ENCODE measurements at regions of chr3 and their contacts with region 1.

Region 1: DNA sequence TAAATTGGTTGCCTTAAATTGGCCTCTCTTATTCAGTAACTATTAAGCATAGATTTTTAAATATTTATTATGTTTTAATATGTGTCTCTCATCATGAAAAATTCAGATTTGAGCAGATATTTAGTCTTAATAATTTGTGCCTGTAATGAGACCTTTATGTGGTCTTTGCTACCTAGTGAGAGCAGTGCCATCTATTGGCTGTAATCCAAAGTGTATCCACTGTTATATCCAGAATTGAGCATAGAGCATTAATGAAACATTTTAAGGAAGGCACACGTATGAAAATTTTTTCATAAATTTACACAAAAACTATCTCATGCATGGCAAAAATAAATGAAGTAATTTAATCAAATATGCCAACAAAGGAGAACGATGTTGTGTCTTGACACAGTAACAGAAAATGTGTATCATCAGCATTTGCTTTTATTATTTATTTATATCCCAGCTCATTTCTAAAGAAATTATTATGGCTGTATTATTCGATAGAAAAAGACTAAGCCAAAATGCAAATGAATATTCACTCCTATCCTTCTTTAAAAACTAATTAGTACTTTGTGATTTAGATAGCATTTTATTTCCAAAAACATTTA is 203.5 kb downstream of the RSRC1 start:
- DNase-seq: no peak
- ATAC-seq: peak; percentile 82
- H3K4me3 ChIP-seq: no peak overlapping the region
- H3K27ac ChIP-seq: no peak overlapping the region
- H3K4me1 ChIP-seq: peaks cover 4% of the 10 kb centered on the region; the same call in 1 of the 2 replicates
- H3K27me3 ChIP-seq: no peaks in the 10 kb centered on the region
- CTCF ChIP-seq: peak; percentile 48 to 71 (median 59); a peak in 5 of 6 replicates
- EP300 ChIP-seq: no peak
- POLR2A ChIP-seq: no peak
- RAD21 ChIP-seq: peak; percentile 79

Region 2: GRCh38 chr3:157626789-157627188 is 686.6 kb before region 1 on chr3:
- CTCF ChIA-PET with region 1: no interaction called
- POLR2A ChIA-PET with region 1: no interaction called
- RAD21 ChIA-PET with region 1: no interaction called
- SMC1A ChIA-PET with region 1: no interaction called
- in situ Hi-C with region 1: loop called (anchors 25 kb)
- intact Hi-C with region 1: loop called (anchors 5 kb)
- DNase-seq: no peak
- ATAC-seq: no peak
- H3K4me3 ChIP-seq: no peak overlapping the region
- H3K27ac ChIP-seq: no peak overlapping the region
- H3K4me1 ChIP-seq: no peaks in the 10 kb centered on the region
- H3K27me3 ChIP-seq: no peaks in the 10 kb centered on the region; a peak in 1 of 4 replicates
- CTCF ChIP-seq: no peak
- EP300 ChIP-seq: no peak
- POLR2A ChIP-seq: no peak
- RAD21 ChIP-seq: no peak

Region 3: DNA sequence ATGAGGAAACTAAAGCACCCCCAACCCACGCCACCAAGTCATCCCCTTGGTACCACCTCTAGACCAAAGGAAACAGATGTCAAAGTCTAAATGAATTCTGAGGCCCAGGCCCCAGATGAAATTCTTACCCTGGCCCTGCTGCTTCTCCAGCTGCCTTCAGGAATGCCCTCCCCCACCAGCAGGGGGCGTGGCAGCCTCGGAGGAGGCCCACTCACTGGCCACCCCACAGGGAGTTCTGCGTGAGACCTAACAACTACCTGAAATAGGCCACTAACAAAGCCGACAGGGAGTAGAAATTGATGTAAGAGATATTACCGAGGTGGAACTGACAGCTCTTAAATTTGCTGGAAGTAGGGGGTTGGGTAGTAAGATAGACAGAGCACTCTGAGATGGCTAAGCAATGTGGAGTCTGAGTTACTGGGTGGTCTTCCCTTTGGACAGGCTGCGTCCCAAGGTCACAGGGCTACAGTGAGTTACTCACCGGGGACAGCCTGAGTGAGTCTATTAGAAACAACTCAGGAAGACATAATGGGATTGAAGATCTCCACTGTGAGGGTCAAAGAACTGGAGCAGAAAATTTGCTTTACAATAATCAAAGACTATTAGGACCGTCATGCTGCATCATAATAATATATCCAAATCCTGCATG is 448.0 kb before region 1 on chr3:
- CTCF ChIA-PET with region 1: interaction called, 40 read pairs
- POLR2A ChIA-PET with region 1: no interaction called
- RAD21 ChIA-PET with region 1: interaction called, 8 read pairs
- SMC1A ChIA-PET with region 1: interaction called, 25 read pairs
- in situ Hi-C with region 1: loop called (anchors 10 kb)
- intact Hi-C with region 1: loop called (anchors 1 kb)
- DNase-seq: peak; percentile 1
- ATAC-seq: peak; percentile 99
- H3K4me3 ChIP-seq: no peak overlapping the region
- H3K27ac ChIP-seq: no peak overlapping the region
- H3K4me1 ChIP-seq: no peaks in the 10 kb centered on the region
- H3K27me3 ChIP-seq: no peaks in the 10 kb centered on the region
- CTCF ChIP-seq: peak; percentile 84 to 92 (median 85)
- EP300 ChIP-seq: no peak
- POLR2A ChIP-seq: no peak
- RAD21 ChIP-seq: peak; percentile 92

Region 4: GRCh38 chr3:158109804-158110657 is 203.4 kb before region 1 on chr3 and contains the start of gene RSRC1:
- CTCF ChIA-PET with region 1: interaction called, 4 read pairs
- POLR2A ChIA-PET with region 1: no interaction called
- RAD21 ChIA-PET with region 1: interaction called, 11 read pairs
- SMC1A ChIA-PET with region 1: interaction called, 4 read pairs
- in situ Hi-C with region 1: no loop called
- intact Hi-C with region 1: no loop called
- DNase-seq: peak; percentile 55
- ATAC-seq: peak; percentile 91
- H3K4me3 ChIP-seq: peak within 1 kb of the TSS; percentile 79
- H3K27ac ChIP-seq: peak within 1 kb of the TSS; percentile 80
- H3K4me1 ChIP-seq: 0 out of 2 replicates have a peak, but pooled peaks cover 4% of the 10 kb centered on the region
- H3K27me3 ChIP-seq: peaks cover 6 to 8% of the 10 kb centered on the region in 2 experiments; a peak in 2 of 4 replicates
- CTCF ChIP-seq: no peak
- EP300 ChIP-seq: no peak
- POLR2A ChIP-seq: peak; percentile 84
- RAD21 ChIP-seq: peak; percentile 28; the same call in 1 of the 2 replicates
- polyA plus RNA-seq, gene RSRC1: 47.6 to 83.3 TPM

Region 5: GRCh38 chr3:158570999-158571974 is 257.9 kb after region 1 on chr3 and contains the start of gene MLF1:
- CTCF ChIA-PET with region 1: no interaction called
- POLR2A ChIA-PET with region 1: no interaction called
- RAD21 ChIA-PET with region 1: no interaction called
- SMC1A ChIA-PET with region 1: no interaction called
- in situ Hi-C with region 1: no loop called
- intact Hi-C with region 1: no loop called
- DNase-seq: peak; percentile 42
- ATAC-seq: peak; percentile 99
- H3K4me3 ChIP-seq: peak within 1 kb of the TSS; percentile 62; the same call in 1 of the 2 replicates
- H3K27ac ChIP-seq: no peak within 1 kb of the TSS
- H3K4me1 ChIP-seq: no peaks in the 10 kb centered on the region
- H3K27me3 ChIP-seq: 0 out of 4 replicates have a peak, but pooled peaks cover 0 to 2% of the 10 kb centered on the region in 2 experiments
- CTCF ChIP-seq: no peak
- EP300 ChIP-seq: no peak
- POLR2A ChIP-seq: 0 out of 2 replicates have a peak, but pooled peaks have one; percentile 29
- RAD21 ChIP-seq: no peak
- polyA plus RNA-seq, gene MLF1: 0.39 to 0.42 TPM

Region 6: DNA sequence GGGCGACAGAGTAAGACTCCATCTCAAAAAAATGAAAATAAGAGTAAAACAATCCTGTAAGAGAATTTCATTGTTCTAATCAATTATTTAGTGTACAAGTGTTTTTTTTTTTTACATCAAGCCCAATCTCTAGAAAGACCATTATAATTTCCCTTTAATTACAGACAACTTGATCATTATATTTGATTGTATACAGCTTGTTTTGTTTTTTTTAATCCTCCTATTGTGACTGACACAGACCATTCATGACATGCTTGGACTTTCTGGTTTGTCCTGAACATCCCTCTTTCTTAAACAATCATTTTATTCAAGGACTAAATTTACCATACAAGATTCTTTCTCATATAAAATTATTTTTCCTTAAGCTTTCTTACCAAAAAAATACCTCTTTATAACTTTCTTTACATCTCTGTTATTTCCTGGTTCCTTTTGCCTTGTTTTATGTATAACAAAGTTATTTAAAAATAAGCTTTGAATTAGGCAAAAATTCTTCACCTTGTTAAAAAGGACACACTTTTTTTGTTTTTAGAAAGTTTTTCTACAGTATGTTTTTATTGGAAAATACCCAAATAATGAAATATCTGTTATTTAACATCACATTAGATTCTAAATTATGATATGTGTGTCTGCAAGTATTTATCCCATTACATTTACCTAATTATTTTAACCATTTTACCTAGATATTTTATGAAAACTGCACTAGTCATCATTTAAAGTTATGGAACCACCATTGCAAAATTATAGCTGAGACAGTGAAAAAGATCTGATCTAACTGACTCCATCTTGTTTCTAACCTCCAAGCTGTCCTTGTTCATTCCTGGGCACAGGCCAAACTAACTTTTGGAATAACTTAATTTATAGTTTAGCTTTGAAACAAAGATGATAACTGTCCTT is 304.8 kb after region 1 on chr3:
- CTCF ChIA-PET with region 1: no interaction called
- POLR2A ChIA-PET with region 1: no interaction called
- RAD21 ChIA-PET with region 1: no interaction called
- SMC1A ChIA-PET with region 1: no interaction called
- in situ Hi-C with region 1: no loop called
- intact Hi-C with region 1: no loop called
- DNase-seq: no peak
- ATAC-seq: no peak
- H3K4me3 ChIP-seq: no peak overlapping the region
- H3K27ac ChIP-seq: no peak overlapping the region
- H3K4me1 ChIP-seq: no peaks in the 10 kb centered on the region
- H3K27me3 ChIP-seq: no peaks in the 10 kb centered on the region
- CTCF ChIP-seq: no peak
- EP300 ChIP-seq: no peak
- POLR2A ChIP-seq: no peak
- RAD21 ChIP-seq: no peak